ENCODE measurements at regions of chr1 and their contacts with region 1.

Region 1: GRCh38 chr1:15046487-15047165 is 106.9 kb upstream of the TMEM51 start:
- DNase-seq: no peak
- ATAC-seq: peak; percentile 64

Region 2: GRCh38 chr1:13662493-13662892 is 1384.1 kb before region 1 on chr1:
- intact Hi-C with region 1: loop called (anchors 10 kb)
- DNase-seq: no peak
- ATAC-seq: peak; percentile 56

Region 3: GRCh38 chr1:13965770-13966398 is 1080.7 kb before region 1 on chr1:
- intact Hi-C with region 1: loop called (anchors 2 kb)
- DNase-seq: no peak
- ATAC-seq: peak; percentile 86

Region 4: DNA sequence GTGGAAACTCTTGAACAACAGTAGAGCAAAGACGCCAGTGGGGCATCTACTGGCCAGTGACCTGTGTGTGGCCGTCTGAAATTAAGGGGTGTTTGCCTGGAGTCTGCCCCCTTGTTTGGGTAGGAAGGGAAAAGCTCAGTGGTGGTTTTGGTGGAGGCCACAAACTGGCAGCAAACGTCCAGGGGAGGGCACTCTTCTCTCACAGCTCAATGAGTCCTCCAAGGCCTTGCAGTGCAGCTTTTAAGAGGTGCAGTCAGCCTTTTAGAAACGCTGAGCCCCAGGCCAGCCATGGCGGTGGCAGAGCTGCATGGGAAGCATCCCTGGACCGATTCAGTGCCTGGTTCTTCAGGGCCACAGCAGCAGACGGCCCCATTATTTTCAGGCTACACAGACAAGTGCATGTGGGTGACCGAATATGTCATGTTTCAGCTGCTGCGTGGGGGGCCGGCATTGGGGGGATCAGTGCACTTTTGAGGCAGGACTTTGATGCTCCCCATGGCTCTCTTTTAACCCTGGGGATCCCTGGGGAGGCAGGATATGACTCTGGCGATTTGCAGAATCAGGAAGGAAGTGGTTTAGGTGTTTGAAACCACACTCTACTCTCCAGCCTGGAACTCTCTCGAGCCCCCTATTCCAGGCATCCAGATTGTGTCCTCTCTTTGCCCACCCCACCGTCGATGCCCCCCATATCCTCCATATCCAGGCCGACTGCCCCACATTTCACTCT is 932.6 kb before region 1 on chr1:
- intact Hi-C with region 1: loop called (anchors 5 kb)
- DNase-seq: no peak
- ATAC-seq: peak; percentile 73

Region 5: GRCh38 chr1:14778898-14779865 is 267.4 kb before region 1 on chr1:
- intact Hi-C with region 1: loop called (anchors 5 kb)
- DNase-seq: no peak
- ATAC-seq: no peak

Region 6: DNA sequence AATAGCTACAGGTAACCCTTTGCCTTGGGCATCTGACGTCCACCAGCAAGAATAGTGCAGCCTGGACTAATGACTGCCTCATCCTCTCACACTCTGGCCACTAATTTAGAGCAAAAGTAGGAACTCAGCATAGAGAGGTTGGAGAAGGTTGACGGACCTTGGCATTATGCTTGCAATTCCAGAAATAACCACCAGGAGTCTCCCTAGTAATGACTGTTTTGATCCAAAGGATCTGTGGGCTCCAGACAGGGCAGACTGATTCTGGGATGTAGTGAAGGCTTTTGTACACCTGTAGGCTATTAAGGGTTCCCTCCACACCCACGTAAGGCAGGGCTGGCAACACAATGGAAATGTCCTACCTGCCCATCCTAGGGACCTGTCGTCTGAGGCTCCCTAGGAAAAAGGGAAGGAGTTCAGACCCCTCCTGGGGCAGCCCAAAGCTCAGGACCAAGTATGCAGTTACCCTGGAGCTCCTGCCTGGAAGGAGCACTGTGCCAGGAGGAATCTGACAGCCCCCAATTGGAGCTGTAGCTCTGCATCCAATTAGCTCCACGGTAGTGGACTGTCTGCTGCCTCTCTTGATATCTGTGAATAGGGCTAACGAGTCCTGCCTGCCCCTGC is 16.0 kb after region 1 on chr1:
- intact Hi-C with region 1: no loop called
- DNase-seq: no peak
- ATAC-seq: no peak

Measured in Right ventricle myocardium inferior (tissue), 1 donor.